B cell (primary cell): ENCODE measurements at regions of chr9 and their contacts with region 1.

Region 1: GRCh38 chr9:131253891-131254491 is 22.3 kb downstream of the FAM78A start:
- DNase-seq: peak; percentile 63
- ATAC-seq: peak; percentile 22
- H3K4me3 ChIP-seq: no peak overlapping the region
- H3K4me3 Mint-ChIP-seq: peak overlapping the region; percentile 81
- H3K27ac ChIP-seq: peak overlapping the region; percentile 68 to 95
- H3K27ac Mint-ChIP-seq: peak overlapping the region; percentile 96
- H3K4me1 ChIP-seq: peaks cover 50 to 61% of the 10 kb centered on the region in 2 donors
- H3K4me1 Mint-ChIP-seq: peaks cover 35% of the 10 kb centered on the region
- H3K27me3 ChIP-seq: no peaks in the 10 kb centered on the region
- H3K27me3 Mint-ChIP-seq: no peaks in the 10 kb centered on the region
- CTCF ChIP-seq: no peak

Region 2: GRCh38 chr9:131237931-131238401 is 16.0 kb before region 1 on chr9:
- CTCF ChIA-PET with region 1: interaction called, 8 read pairs
- POLR2A ChIA-PET with region 1: interaction called, 13 read pairs
- intact Hi-C with region 1: loop called (anchors 1 kb)
- DNase-seq: peak; percentile 79
- ATAC-seq: peak; percentile 95
- H3K4me3 ChIP-seq: peak overlapping the region; percentile 27 to 65 (median 46)
- H3K4me3 Mint-ChIP-seq: peak overlapping the region; percentile 92
- H3K27ac ChIP-seq: peak overlapping the region; percentile 63 to 69
- H3K27ac Mint-ChIP-seq: peak overlapping the region; percentile 97
- H3K4me1 ChIP-seq: peaks cover 19 to 27% of the 10 kb centered on the region in 2 donors
- H3K4me1 Mint-ChIP-seq: peaks cover 20% of the 10 kb centered on the region
- H3K27me3 ChIP-seq: no peaks in the 10 kb centered on the region
- H3K27me3 Mint-ChIP-seq: no peaks in the 10 kb centered on the region
- CTCF ChIP-seq: no peak

Region 3: GRCh38 chr9:131270171-131271015 is 16.4 kb after region 1 on chr9:
- CTCF ChIA-PET with region 1: interaction called, 158 read pairs
- POLR2A ChIA-PET with region 1: interaction called, 199 read pairs
- intact Hi-C with region 1: loop called (anchors 1 kb)
- DNase-seq: peak; percentile 69
- ATAC-seq: peak; percentile 15
- H3K4me3 ChIP-seq: peak overlapping the region; percentile 23 to 58 (median 49)
- H3K4me3 Mint-ChIP-seq: peak overlapping the region; percentile 83
- H3K27ac ChIP-seq: peak overlapping the region; percentile 86 to 91
- H3K27ac Mint-ChIP-seq: peak overlapping the region; percentile 96
- H3K4me1 ChIP-seq: peaks cover 75 to 90% of the 10 kb centered on the region in 2 donors
- H3K4me1 Mint-ChIP-seq: peaks cover 78% of the 10 kb centered on the region
- H3K27me3 ChIP-seq: no peaks in the 10 kb centered on the region
- H3K27me3 Mint-ChIP-seq: no peaks in the 10 kb centered on the region
- CTCF ChIP-seq: no peak